CD8-positive, alpha-beta T cell (primary cell): ENCODE measurements at regions of chr3 and their contacts with region 1.

Region 1: GRCh38 chr3:179227349-179227748 is 23.6 kb downstream of the KCNMB3 start:
- DNase-seq: no peak
- ATAC-seq: no peak
- H3K4me3 ChIP-seq: no peak overlapping the region
- H3K4me3 Mint-ChIP-seq: no peak overlapping the region
- H3K27ac ChIP-seq: no peak overlapping the region
- H3K27ac Mint-ChIP-seq: no peak overlapping the region
- H3K4me1 ChIP-seq: no peaks in the 10 kb centered on the region
- H3K4me1 Mint-ChIP-seq: no peaks in the 10 kb centered on the region
- H3K27me3 ChIP-seq: no peaks in the 10 kb centered on the region
- H3K27me3 Mint-ChIP-seq: no peaks in the 10 kb centered on the region
- CTCF ChIP-seq: no peak

Region 2: GRCh38 chr3:179189759-179190158 is 37.6 kb before region 1 on chr3:
- CTCF ChIA-PET with region 1: no interaction called
- POLR2A ChIA-PET with region 1: no interaction called
- intact Hi-C with region 1: loop called in 1 of 2 experiments (anchors 5 kb)
- DNase-seq: no peak
- ATAC-seq: no peak
- H3K4me3 ChIP-seq: no peak overlapping the region
- H3K4me3 Mint-ChIP-seq: no peak overlapping the region
- H3K27ac ChIP-seq: no peak overlapping the region
- H3K27ac Mint-ChIP-seq: no peak overlapping the region
- H3K4me1 ChIP-seq: peaks cover 9% of the 10 kb centered on the region
- H3K4me1 Mint-ChIP-seq: peaks cover 66% of the 10 kb centered on the region
- H3K27me3 ChIP-seq: no peaks in the 10 kb centered on the region
- H3K27me3 Mint-ChIP-seq: no peaks in the 10 kb centered on the region
- CTCF ChIP-seq: no peak

Region 3: GRCh38 chr3:179309225-179310078 is 82.1 kb after region 1 on chr3:
- CTCF ChIA-PET with region 1: no interaction called
- POLR2A ChIA-PET with region 1: no interaction called
- intact Hi-C with region 1: loop called in 1 of 2 experiments (anchors 10 kb)
- DNase-seq: no peak
- ATAC-seq: no peak
- H3K4me3 ChIP-seq: no peak overlapping the region
- H3K4me3 Mint-ChIP-seq: no peak overlapping the region
- H3K27ac ChIP-seq: no peak overlapping the region
- H3K27ac Mint-ChIP-seq: no peak overlapping the region
- H3K4me1 ChIP-seq: no peaks in the 10 kb centered on the region
- H3K4me1 Mint-ChIP-seq: no peaks in the 10 kb centered on the region
- H3K27me3 ChIP-seq: no peaks in the 10 kb centered on the region
- H3K27me3 Mint-ChIP-seq: peaks cover 3% of the 10 kb centered on the region
- CTCF ChIP-seq: no peak

Region 4: GRCh38 chr3:180496995-180497394 is 1269.6 kb after region 1 on chr3:
- CTCF ChIA-PET with region 1: no interaction called
- POLR2A ChIA-PET with region 1: no interaction called
- intact Hi-C with region 1: no loop called
- DNase-seq: no peak
- ATAC-seq: no peak
- H3K4me3 ChIP-seq: no peak overlapping the region
- H3K4me3 Mint-ChIP-seq: no peak overlapping the region
- H3K27ac ChIP-seq: no peak overlapping the region
- H3K27ac Mint-ChIP-seq: no peak overlapping the region
- H3K4me1 ChIP-seq: no peaks in the 10 kb centered on the region
- H3K4me1 Mint-ChIP-seq: no peaks in the 10 kb centered on the region
- H3K27me3 ChIP-seq: no peaks in the 10 kb centered on the region
- H3K27me3 Mint-ChIP-seq: no peaks in the 10 kb centered on the region
- CTCF ChIP-seq: no peak